ENCODE measurements at regions of chr10 and their contacts with region 1.

Region 1: DNA sequence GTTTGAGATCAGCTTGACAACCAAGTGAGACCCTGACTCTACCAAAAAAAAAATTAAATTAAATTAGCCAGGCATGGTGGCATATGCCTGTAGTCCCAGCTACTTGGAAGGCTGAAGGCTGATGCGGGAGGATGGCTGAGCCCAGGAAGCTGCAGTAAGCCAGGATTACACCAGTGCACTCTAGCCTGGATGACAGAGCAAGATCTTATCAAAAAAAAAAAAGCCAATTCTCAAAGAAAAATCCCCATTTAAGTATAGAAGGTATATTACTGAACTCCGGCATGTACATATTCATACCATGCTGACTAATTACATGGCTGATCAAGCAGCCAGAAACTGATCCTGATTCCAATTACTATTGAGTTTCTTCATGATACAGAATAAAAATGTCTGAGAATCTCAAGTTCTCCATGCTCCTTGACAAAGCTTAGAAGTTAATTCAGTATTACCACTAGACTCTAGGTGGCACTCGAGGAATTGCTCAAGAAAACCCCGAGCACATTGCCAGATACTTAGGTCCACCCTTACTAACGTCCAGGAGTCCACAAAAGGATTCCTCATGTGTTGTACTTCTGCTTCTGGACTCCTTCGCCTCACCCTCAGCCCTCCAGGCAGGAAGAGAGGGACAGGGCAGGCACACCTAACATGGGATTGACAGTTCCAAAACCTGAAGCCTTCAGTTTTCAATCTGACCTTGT is 148.9 kb downstream of the PARD3 start:
- DNase-seq: peak; percentile 73 to 93
- ATAC-seq: peak; percentile 97 to 99
- H3K4me3 ChIP-seq: no peak overlapping the region
- H3K27ac ChIP-seq: peak overlapping the region; percentile 33 to 78; a peak in 4 of 6 replicates
- H3K4me1 ChIP-seq: peaks cover 23% of the 10 kb centered on the region
- CTCF ChIP-seq: peak; percentile 89
- EP300 ChIP-seq: no peak
- POLR2A ChIP-seq: no peak
- RAD21 ChIP-seq: peak; percentile 92 to 95

Region 2: DNA sequence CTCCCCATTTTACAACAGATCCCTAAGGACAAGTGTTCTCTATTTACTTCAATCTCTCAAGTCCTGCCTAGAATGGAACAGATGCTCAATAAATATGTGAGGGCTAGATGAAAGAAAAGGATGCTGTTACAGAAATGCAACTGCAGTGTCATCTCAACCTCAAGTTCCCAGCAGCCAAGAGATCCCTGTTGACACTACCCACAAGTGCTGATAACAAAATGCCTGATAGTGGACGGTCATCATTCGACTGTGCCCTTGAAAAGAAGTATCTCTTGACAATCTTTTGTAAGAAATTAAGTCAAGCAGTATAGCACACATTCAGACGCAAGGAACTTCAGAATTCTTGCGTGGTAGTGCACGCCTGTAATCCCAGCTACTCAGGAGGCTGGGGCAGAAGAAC is 15.8 kb after region 1 on chr10:
- CTCF ChIA-PET with region 1: interaction called, 11 read pairs
- POLR2A ChIA-PET with region 1: no interaction called
- DNase-seq: no peak
- ATAC-seq: no peak
- H3K4me3 ChIP-seq: no peak overlapping the region
- H3K27ac ChIP-seq: no peak overlapping the region
- H3K4me1 ChIP-seq: peaks cover 4% of the 10 kb centered on the region; the same call in 2 of the 3 replicates
- CTCF ChIP-seq: no peak
- EP300 ChIP-seq: no peak
- POLR2A ChIP-seq: no peak
- RAD21 ChIP-seq: no peak

Region 3: GRCh38 chr10:34816501-34817002 is 150.4 kb after region 1 on chr10:
- CTCF ChIA-PET with region 1: interaction called, 10 read pairs
- POLR2A ChIA-PET with region 1: no interaction called
- DNase-seq: peak; percentile 28 to 44
- ATAC-seq: peak; percentile 16 to 47; a peak in 3 of 6 replicates
- H3K4me3 ChIP-seq: peak overlapping the region; percentile 98
- H3K27ac ChIP-seq: peak overlapping the region in 1 of 2 experiments; percentile 96; a peak in 3 of 6 replicates
- H3K4me1 ChIP-seq: peaks cover 28% of the 10 kb centered on the region
- CTCF ChIP-seq: no peak
- EP300 ChIP-seq: no peak
- POLR2A ChIP-seq: no peak
- RAD21 ChIP-seq: 0 out of 5 replicates have a peak, but pooled peaks of 1 of the 2 experiments have one; percentile 13

Region 4: DNA sequence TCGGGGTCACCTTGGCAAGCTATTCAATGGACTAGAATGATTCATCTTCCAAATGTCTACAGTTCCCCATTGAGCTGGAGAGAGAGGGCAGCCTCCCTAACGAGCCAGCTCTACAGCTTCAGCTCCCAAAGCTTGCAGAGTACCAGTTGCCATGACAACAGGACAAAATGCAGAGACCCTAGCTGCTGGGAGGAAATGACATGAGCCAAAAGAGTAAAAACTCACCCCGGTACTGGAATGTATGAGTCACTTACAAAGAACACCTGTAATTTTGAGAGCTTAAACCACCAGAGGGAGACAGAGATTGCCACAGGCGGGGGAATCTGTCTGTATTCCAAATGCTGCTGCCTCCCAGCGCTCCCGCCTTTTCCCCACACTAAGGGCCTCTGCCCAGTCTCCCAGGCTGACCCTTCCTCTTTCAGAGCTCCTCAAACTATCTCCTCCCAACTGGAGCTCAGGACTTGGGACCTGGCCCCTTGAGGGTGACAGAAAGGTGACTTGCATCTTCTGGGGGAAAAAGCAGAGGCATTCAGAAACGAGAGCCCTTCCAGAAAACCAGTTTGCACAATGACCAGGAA is 328.5 kb after region 1 on chr10:
- CTCF ChIA-PET with region 1: interaction called, 46 read pairs
- POLR2A ChIA-PET with region 1: no interaction called
- DNase-seq: peak; percentile 72 to 77
- ATAC-seq: peak; percentile 86 to 89
- H3K4me3 ChIP-seq: no peak overlapping the region
- H3K27ac ChIP-seq: peak overlapping the region in 1 of 2 experiments; percentile 55; a peak in 3 of 6 replicates
- H3K4me1 ChIP-seq: peaks cover 21% of the 10 kb centered on the region
- CTCF ChIP-seq: peak; percentile 84
- EP300 ChIP-seq: no peak
- POLR2A ChIP-seq: no peak
- RAD21 ChIP-seq: peak; percentile 81 to 84

Measured in A549 (cell line).